Activated CD4-positive, alpha-beta T cell treated with anti-CD3 and anti-CD28 coated beads for 36 hours (primary cell): ENCODE measurements at regions of chr21 and their contacts with region 1.

Region 1: DNA sequence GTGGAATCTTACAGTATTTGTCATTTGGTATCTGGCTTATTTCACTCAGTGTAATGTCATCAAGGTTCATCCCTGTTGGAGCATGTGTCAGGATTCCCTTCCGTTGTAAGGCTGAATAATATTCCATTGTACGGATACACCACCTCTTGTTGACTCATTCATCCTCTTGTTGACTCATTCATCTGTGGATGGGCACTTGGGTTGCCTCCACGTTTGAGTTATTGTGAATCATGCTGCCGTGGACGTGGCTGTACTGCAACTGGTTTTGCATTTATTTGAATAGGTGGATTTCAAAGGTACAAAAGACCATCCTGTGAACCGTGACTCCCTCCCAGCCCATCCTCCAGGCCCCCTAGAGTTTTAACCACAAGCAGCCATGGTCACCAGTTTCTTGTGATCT is 11.9 kb upstream of the TCP10L start:
- DNase-seq: peak; percentile 39
- ATAC-seq: peak; percentile 50
- H3K4me3 Mint-ChIP-seq: no peak overlapping the region
- H3K27ac Mint-ChIP-seq: peak overlapping the region; percentile 71
- H3K4me1 Mint-ChIP-seq: peaks cover 12% of the 10 kb centered on the region
- H3K27me3 Mint-ChIP-seq: no peaks in the 10 kb centered on the region

Region 2: GRCh38 chr21:32403201-32403777 is 193.9 kb before region 1 on chr21:
- CTCF ChIA-PET with region 1: interaction called, 106 read pairs
- POLR2A ChIA-PET with region 1: no interaction called
- intact Hi-C with region 1: loop called (anchors 1 kb)
- DNase-seq: peak; percentile 77
- ATAC-seq: peak; percentile 92
- H3K4me3 Mint-ChIP-seq: no peak overlapping the region
- H3K27ac Mint-ChIP-seq: no peak overlapping the region
- H3K4me1 Mint-ChIP-seq: peaks cover 7% of the 10 kb centered on the region
- H3K27me3 Mint-ChIP-seq: no peaks in the 10 kb centered on the region

Region 3: DNA sequence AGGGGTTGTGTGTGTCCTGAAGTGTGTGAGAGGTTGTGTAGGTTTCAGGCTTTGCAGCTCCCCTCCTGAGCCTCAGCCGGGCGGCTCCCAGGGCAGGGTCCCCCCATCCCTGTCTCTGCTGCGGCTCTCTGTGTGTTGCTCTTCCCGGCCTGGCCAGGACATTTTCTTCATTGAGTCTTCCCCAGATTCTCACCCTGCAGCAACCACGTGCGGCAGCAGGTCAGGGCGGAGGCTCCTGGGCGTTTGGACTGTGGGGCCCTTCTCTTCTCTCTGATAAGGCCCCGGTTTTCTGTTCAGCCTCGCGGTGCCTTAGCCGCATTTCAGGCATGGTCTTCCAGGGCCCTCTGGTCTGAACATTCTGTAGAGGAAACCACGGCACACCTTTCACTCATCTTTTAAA is 10.1 kb before region 1 on chr21:
- CTCF ChIA-PET with region 1: interaction called, 20 read pairs
- POLR2A ChIA-PET with region 1: no interaction called
- intact Hi-C with region 1: no loop called
- DNase-seq: no peak
- ATAC-seq: no peak
- H3K4me3 Mint-ChIP-seq: no peak overlapping the region
- H3K27ac Mint-ChIP-seq: no peak overlapping the region
- H3K4me1 Mint-ChIP-seq: no peaks in the 10 kb centered on the region
- H3K27me3 Mint-ChIP-seq: no peaks in the 10 kb centered on the region

Region 4: GRCh38 chr21:32712043-32712442 is 114.8 kb after region 1 on chr21:
- CTCF ChIA-PET with region 1: interaction called, 11 read pairs
- POLR2A ChIA-PET with region 1: no interaction called
- intact Hi-C with region 1: no loop called
- DNase-seq: peak; percentile 39
- ATAC-seq: peak; percentile 47
- H3K4me3 Mint-ChIP-seq: no peak overlapping the region
- H3K27ac Mint-ChIP-seq: no peak overlapping the region
- H3K4me1 Mint-ChIP-seq: peaks cover 23% of the 10 kb centered on the region
- H3K27me3 Mint-ChIP-seq: no peaks in the 10 kb centered on the region